ENCODE measurements at regions of chr2 and their contacts with region 1.

Region 1: GRCh38 chr2:11446733-11447248 is 19.2 kb downstream of the E2F6 start:
- DNase-seq: peak; percentile 48
- H3K4me3 ChIP-seq: no peak overlapping the region
- H3K27ac ChIP-seq: no peak overlapping the region
- H3K4me1 ChIP-seq: no peaks in the 10 kb centered on the region
- H3K27me3 ChIP-seq: no peaks in the 10 kb centered on the region
- CTCF ChIP-seq: peak; percentile 71 to 88

Region 2: GRCh38 chr2:11411768-11412448 is 34.9 kb before region 1 on chr2:
- CTCF ChIA-PET with region 1: no interaction called
- dilution Hi-C with region 1: loop called (anchors 5 kb)
- in situ Hi-C with region 1: no loop called
- intact Hi-C with region 1: loop called (anchors 5 kb)
- DNase-seq: no peak
- H3K4me3 ChIP-seq: no peak overlapping the region
- H3K27ac ChIP-seq: no peak overlapping the region
- H3K4me1 ChIP-seq: no peaks in the 10 kb centered on the region
- H3K27me3 ChIP-seq: no peaks in the 10 kb centered on the region
- CTCF ChIP-seq: peak; percentile 72 to 84

Measured in mammary epithelial cell (primary cell).